Aorta (tissue), 5 donors: ENCODE measurements at regions of chr15 and their contacts with region 1.

Region 1: GRCh38 chr15:64046347-64047153 is at the start of gene DAPK2:
- DNase-seq: peak; percentile 77 to 89
- ATAC-seq: peak; percentile 88
- H3K4me3 ChIP-seq: peak within 1 kb of the TSS; percentile 37 to 85
- H3K27ac ChIP-seq: no peak within 1 kb of the TSS
- H3K4me1 ChIP-seq: no peaks in the 10 kb centered on the region
- H3K27me3 ChIP-seq: no peaks in the 10 kb centered on the region
- total RNA-seq, gene DAPK2: 6.0 to 8.0 TPM

Region 2: GRCh38 chr15:63915873-63916771 is 130.4 kb before region 1 on chr15:
- intact Hi-C with region 1: loop called in 1 of 2 experiments (anchors 10 kb)
- DNase-seq: peak in 1 of 2 donors; percentile 51
- ATAC-seq: no peak
- H3K4me3 ChIP-seq: no peak overlapping the region
- H3K27ac ChIP-seq: no peak overlapping the region
- H3K4me1 ChIP-seq: no peaks in the 10 kb centered on the region
- H3K27me3 ChIP-seq: no peaks in the 10 kb centered on the region

Region 3: GRCh38 chr15:63939531-63940130 is 106.9 kb before region 1 on chr15:
- intact Hi-C with region 1: loop called in 1 of 2 experiments (anchors 5 kb)
- DNase-seq: peak; percentile 70 to 74
- ATAC-seq: peak; percentile 77
- H3K4me3 ChIP-seq: no peak overlapping the region
- H3K27ac ChIP-seq: peak overlapping the region in 1 of 2 donors; percentile 93
- H3K4me1 ChIP-seq: peaks cover 0 to 3% of the 10 kb centered on the region in 2 donors
- H3K27me3 ChIP-seq: no peaks in the 10 kb centered on the region

Region 4: GRCh38 chr15:64102497-64102896 is 55.9 kb after region 1 on chr15:
- intact Hi-C with region 1: no loop called
- DNase-seq: no peak
- ATAC-seq: no peak
- H3K4me3 ChIP-seq: no peak overlapping the region
- H3K27ac ChIP-seq: no peak overlapping the region
- H3K4me1 ChIP-seq: no peaks in the 10 kb centered on the region
- H3K27me3 ChIP-seq: no peaks in the 10 kb centered on the region

Region 5: DNA sequence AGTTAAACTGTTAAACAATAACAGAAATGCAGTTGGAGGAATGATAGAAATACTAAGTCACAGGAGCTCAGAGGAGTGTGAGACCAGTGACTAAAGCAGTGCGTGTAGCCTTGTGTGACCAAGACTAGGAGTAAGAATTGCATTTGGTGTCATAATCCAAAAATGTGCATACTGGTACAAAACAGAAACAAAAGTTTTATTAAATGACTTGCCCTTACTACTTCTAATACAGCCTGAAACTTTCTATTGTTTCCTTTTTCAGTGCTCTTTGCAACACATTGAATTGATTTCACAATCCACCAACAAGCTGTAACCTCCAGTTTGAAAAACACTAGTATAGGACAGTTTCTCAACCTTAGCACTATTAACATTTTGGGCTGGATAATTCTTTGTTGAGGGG is 66.4 kb after region 1 on chr15:
- intact Hi-C with region 1: no loop called
- DNase-seq: no peak
- ATAC-seq: no peak
- H3K4me3 ChIP-seq: no peak overlapping the region
- H3K27ac ChIP-seq: no peak overlapping the region
- H3K4me1 ChIP-seq: peaks cover 0 to 2% of the 10 kb centered on the region in 2 donors
- H3K27me3 ChIP-seq: no peaks in the 10 kb centered on the region